Mammary epithelial cell (primary cell): ENCODE measurements at regions of chr18 and their contacts with region 1.

Region 1: DNA sequence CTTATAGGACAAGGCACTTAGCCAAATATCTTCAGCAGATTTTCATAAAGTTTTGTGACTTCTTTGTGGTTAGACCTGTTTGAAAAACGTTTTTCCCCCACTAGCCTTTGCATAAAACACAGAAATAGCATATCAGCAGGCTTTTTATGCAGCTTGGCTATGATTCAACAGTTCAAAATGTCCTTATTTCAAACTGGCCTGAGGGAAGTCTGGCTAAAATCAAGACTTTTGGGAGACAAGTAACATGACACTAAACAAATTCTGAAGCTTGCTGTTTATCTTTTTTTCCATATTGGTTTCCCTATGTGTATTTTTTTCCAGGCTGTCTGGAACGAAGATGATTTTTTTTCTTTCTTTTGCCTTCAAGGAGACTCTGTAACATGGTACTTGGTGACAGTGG is 95.1 kb upstream of the L3MBTL4 start:
- DNase-seq: peak; percentile 35
- H3K4me3 ChIP-seq: no peak overlapping the region
- H3K27ac ChIP-seq: no peak overlapping the region
- H3K4me1 ChIP-seq: no peaks in the 10 kb centered on the region
- H3K27me3 ChIP-seq: no peaks in the 10 kb centered on the region
- CTCF ChIP-seq: no peak

Region 2: GRCh38 chr18:6482198-6482977 is 27.4 kb before region 1 on chr18:
- CTCF ChIA-PET with region 1: no interaction called
- dilution Hi-C with region 1: no loop called
- in situ Hi-C with region 1: no loop called
- intact Hi-C with region 1: loop called (anchors 2 kb)
- DNase-seq: peak; percentile 93
- H3K4me3 ChIP-seq: no peak overlapping the region
- H3K27ac ChIP-seq: peak overlapping the region; percentile 29
- H3K4me1 ChIP-seq: peaks cover 7% of the 10 kb centered on the region
- H3K27me3 ChIP-seq: no peaks in the 10 kb centered on the region
- CTCF ChIP-seq: peak in 1 of 2 donors; percentile 37